ENCODE measurements at regions of chr1 and their contacts with region 1.

Region 1: DNA sequence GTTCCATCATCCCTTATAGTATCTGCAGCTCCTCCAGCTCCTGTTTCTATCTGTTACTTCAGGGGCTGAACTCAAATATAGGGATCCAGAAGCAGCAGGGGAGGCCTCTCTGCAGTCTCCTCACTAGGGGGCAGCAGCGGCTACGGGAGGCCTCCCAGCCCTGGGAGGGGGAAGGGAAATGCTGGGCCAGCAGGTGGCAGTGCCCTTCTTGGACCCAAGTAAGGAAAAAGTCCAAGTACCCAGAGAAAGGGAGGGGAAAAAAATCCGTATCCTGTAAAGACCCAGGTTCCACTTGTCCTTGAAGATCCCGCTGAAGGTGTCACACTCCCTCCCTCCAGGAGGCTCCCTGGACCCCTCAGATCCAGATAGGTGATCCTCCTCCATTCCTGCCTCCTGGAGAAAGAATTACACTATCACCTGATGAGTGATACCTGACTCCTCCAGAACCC is 14.1 kb upstream of the NUAK2 start:
- DNase-seq: peak; percentile 95
- H3K4me3 Mint-ChIP-seq: no peak overlapping the region
- H3K27ac Mint-ChIP-seq: no peak overlapping the region
- H3K4me1 Mint-ChIP-seq: no peaks in the 10 kb centered on the region
- H3K27me3 Mint-ChIP-seq: peaks cover 69% of the 10 kb centered on the region
- CTCF ChIP-seq: peak; percentile 96

Region 2: DNA sequence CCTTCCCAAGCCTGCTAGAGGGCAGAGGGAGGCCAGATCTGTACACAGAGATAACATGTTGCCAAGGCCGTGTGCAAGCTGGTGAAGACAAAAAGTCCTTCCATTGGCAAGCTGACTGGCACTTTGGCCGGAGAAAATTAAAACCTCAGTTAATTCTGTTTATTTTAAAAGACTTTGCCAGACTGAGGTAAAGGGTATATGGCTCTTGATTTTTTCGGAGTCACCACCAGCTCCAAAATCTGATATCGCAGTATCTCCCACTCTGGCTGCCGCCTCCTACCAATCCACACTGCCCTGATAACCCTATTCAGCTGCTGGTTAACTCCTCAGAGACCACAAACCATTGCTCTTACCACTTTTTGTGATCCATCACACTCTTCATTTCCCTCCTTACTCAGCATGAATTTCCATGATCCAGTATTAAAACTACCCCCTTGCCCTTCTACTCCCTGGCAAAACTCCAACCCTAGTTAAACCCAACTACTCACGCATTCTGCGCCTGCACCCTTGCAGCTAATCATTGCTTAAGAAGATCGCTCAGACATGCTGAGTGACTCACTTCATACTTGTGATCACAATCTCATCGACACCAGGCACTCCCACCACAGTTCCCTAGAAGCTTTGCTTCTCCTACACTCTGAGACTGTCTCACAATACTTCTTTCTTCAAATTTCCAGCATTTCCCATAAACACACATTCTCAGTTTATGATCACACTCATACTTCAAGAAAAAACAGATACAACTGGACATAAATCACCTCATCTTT is 918.3 kb before region 1 on chr1:
- CTCF ChIA-PET with region 1: interaction called, 12 read pairs
- intact Hi-C with region 1: no loop called
- DNase-seq: peak; percentile 83
- H3K4me3 Mint-ChIP-seq: peak overlapping the region; percentile 68
- H3K27ac Mint-ChIP-seq: peak overlapping the region; percentile 97
- H3K4me1 Mint-ChIP-seq: peaks cover 63% of the 10 kb centered on the region
- H3K27me3 Mint-ChIP-seq: no peaks in the 10 kb centered on the region
- CTCF ChIP-seq: no peak

Region 3: GRCh38 chr1:205354259-205354904 is 18.7 kb after region 1 on chr1:
- CTCF ChIA-PET with region 1: interaction called, 13 read pairs
- intact Hi-C with region 1: no loop called
- DNase-seq: peak; percentile 74
- H3K4me3 Mint-ChIP-seq: no peak overlapping the region
- H3K27ac Mint-ChIP-seq: no peak overlapping the region
- H3K4me1 Mint-ChIP-seq: peaks cover 25% of the 10 kb centered on the region
- H3K27me3 Mint-ChIP-seq: peaks cover 26% of the 10 kb centered on the region
- CTCF ChIP-seq: peak; percentile 88

Region 4: GRCh38 chr1:205449750-205450443 is 114.2 kb after region 1 on chr1:
- CTCF ChIA-PET with region 1: no interaction called
- intact Hi-C with region 1: no loop called
- DNase-seq: peak; percentile 97
- H3K4me3 Mint-ChIP-seq: peak overlapping the region; percentile 100
- H3K27ac Mint-ChIP-seq: peak overlapping the region; percentile 98
- H3K4me1 Mint-ChIP-seq: peaks cover 50% of the 10 kb centered on the region
- H3K27me3 Mint-ChIP-seq: peaks cover 22% of the 10 kb centered on the region
- CTCF ChIP-seq: no peak